ENCODE measurements at regions of chr2 and their contacts with region 1.

Region 1: DNA sequence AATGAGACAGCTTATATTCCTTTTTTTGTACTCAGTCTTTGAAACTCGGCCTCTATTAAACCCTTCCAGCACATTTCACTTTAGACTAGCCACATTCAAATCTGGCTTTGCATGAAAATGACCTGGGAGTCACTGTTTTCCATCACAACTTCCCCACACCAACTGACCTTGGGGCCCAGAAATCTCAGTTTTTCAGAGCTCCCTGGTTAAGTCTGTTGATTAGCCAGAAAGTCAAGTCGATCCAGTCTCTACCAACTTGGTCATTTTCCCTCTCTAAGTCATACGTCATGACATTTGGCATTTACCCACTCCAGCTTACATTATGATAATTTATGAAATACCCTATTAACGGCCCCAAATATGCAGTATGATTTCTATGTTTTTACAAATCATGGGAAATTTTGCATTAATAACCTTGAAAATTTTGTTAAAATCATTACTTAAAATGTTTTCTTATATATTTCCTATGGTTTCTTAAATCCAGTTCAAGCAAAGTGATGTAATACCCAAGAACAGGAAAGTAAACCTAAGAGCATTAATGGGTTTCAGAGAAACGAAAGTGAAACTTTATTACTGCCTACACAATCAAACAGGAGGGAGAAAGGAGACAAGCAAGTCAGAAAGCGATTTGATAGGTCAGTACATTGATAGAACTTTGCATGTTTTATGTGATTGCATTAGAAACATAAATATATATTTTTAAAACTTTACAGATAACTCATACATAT is 77.1 kb downstream of the SPATS2L start:
- DNase-seq: peak in 3 of 14 experiments; percentile 61 to 83 (median 63)
- ATAC-seq: peak; percentile 90
- H3K4me3 ChIP-seq: peak overlapping the region; percentile 27
- H3K4me3 Mint-ChIP-seq: peak overlapping the region; percentile 26
- H3K27ac ChIP-seq: peak overlapping the region in 1 of 2 donors; percentile 16
- H3K27ac Mint-ChIP-seq: peak overlapping the region; percentile 70
- H3K4me1 ChIP-seq: peaks cover 11% of the 10 kb centered on the region
- H3K4me1 Mint-ChIP-seq: peaks cover 38% of the 10 kb centered on the region
- H3K27me3 ChIP-seq: no peaks in the 10 kb centered on the region
- H3K27me3 Mint-ChIP-seq: no peaks in the 10 kb centered on the region
- CTCF ChIP-seq: no peak

Region 2: GRCh38 chr2:200172944-200173581 is 210.5 kb before region 1 on chr2:
- CTCF ChIA-PET with region 1: no interaction called
- POLR2A ChIA-PET with region 1: no interaction called
- intact Hi-C with region 1: no loop called
- DNase-seq: no peak
- ATAC-seq: no peak
- H3K4me3 ChIP-seq: no peak overlapping the region
- H3K4me3 Mint-ChIP-seq: no peak overlapping the region
- H3K27ac ChIP-seq: no peak overlapping the region
- H3K27ac Mint-ChIP-seq: no peak overlapping the region
- H3K4me1 ChIP-seq: no peaks in the 10 kb centered on the region
- H3K4me1 Mint-ChIP-seq: no peaks in the 10 kb centered on the region
- H3K27me3 ChIP-seq: peaks cover 0 to under 1% of the 10 kb centered on the region in 2 experiments
- H3K27me3 Mint-ChIP-seq: peaks cover 3% of the 10 kb centered on the region
- CTCF ChIP-seq: no peak

Region 3: DNA sequence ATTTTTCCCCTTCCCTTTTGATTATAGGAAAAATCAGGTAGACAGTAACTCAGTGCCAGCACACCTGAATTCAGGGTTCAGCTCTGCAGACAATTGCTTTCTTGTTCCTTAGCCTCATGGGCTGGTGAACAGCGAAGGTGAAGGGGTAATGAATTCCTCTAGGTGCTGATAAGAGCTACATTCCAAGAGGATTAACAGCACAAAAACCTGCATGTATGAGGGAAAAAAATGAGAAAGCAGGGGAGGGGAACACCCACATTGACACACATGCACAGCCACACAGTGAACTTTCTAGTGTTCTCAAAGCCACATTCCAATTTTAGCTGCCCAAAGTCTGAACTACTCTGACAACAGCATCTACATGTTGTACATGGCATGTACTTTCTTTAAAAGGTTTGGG is 30.9 kb before region 1 on chr2:
- CTCF ChIA-PET with region 1: no interaction called
- POLR2A ChIA-PET with region 1: no interaction called
- intact Hi-C with region 1: no loop called
- DNase-seq: no peak
- ATAC-seq: no peak
- H3K4me3 ChIP-seq: no peak overlapping the region
- H3K4me3 Mint-ChIP-seq: no peak overlapping the region
- H3K27ac ChIP-seq: no peak overlapping the region
- H3K27ac Mint-ChIP-seq: no peak overlapping the region
- H3K4me1 ChIP-seq: no peaks in the 10 kb centered on the region
- H3K4me1 Mint-ChIP-seq: no peaks in the 10 kb centered on the region
- H3K27me3 ChIP-seq: no peaks in the 10 kb centered on the region
- H3K27me3 Mint-ChIP-seq: no peaks in the 10 kb centered on the region
- CTCF ChIP-seq: no peak

Region 4: DNA sequence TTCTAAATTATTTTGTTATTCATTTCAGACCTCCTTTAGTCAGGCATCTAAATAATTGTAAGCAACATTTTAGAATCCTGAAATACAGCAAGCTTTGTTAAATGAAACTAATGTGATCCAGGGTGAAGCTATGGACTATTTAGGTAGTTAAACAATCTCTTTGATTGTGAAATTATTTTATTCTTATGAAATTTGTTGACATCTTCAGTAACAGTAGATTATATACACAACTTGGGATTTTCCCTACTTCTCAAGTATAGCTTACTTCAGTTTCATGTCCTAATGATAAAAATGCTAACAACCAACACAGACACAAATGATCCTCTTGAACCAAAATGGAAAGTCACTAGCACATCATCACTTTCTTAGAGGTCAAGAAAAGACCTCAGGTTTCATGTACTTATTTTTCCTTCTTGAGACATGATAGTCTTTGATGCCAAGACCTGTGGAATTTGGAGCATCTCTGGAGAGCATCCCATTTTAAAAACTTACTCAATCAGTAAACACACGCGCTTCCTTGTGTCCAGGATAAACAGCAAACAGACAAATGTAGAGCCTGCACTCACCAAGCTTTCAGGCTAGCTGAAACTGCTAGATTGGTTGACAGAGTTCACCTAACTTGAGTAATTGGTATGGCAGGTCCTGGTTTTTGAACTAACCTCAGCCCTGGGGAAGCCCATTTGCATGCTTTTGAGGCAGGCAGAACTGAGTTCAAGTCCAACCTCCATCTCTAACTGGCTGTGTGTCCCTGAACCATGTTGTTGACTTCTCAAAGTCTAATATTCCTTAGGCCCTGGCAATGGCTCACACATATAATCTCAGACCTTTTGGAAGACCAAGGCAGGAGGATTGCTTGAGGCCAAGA is 78.5 kb after region 1 on chr2:
- CTCF ChIA-PET with region 1: no interaction called
- POLR2A ChIA-PET with region 1: interaction called, 4 read pairs
- intact Hi-C with region 1: loop called (anchors 5 to 10 kb)
- DNase-seq: no peak
- ATAC-seq: no peak
- H3K4me3 ChIP-seq: no peak overlapping the region
- H3K4me3 Mint-ChIP-seq: no peak overlapping the region
- H3K27ac ChIP-seq: no peak overlapping the region
- H3K27ac Mint-ChIP-seq: no peak overlapping the region
- H3K4me1 ChIP-seq: peaks cover 20% of the 10 kb centered on the region
- H3K4me1 Mint-ChIP-seq: peaks cover 21% of the 10 kb centered on the region
- H3K27me3 ChIP-seq: no peaks in the 10 kb centered on the region
- H3K27me3 Mint-ChIP-seq: no peaks in the 10 kb centered on the region
- CTCF ChIP-seq: no peak

Measured in CD4-positive, alpha-beta T cell (primary cell).